ENCODE measurements at regions of chr12 and their contacts with region 1.

Region 1: GRCh38 chr12:40622246-40622838 is 69.9 kb upstream of the CNTN1 start:
- DNase-seq: peak in 6 of 35 experiments; percentile 1 to 32 (median 3)
- ATAC-seq: no peak
- H3K4me3 ChIP-seq: no peak overlapping the region
- H3K4me3 Mint-ChIP-seq: no peak overlapping the region
- H3K27ac ChIP-seq: no peak overlapping the region
- H3K27ac Mint-ChIP-seq: no peak overlapping the region
- H3K4me1 ChIP-seq: no peaks in the 10 kb centered on the region
- H3K4me1 Mint-ChIP-seq: no peaks in the 10 kb centered on the region
- H3K27me3 ChIP-seq: peaks cover 0 to 2% of the 10 kb centered on the region in 2 experiments
- H3K27me3 Mint-ChIP-seq: no peaks in the 10 kb centered on the region

Region 2: GRCh38 chr12:40375076-40375475 is 247.3 kb before region 1 on chr12:
- CTCF ChIA-PET with region 1: no interaction called
- POLR2A ChIA-PET with region 1: interaction called in 1 of 2 experiments, 10 read pairs
- DNase-seq: peak in 1 of 35 experiments; percentile 0
- ATAC-seq: no peak
- H3K4me3 ChIP-seq: no peak overlapping the region
- H3K4me3 Mint-ChIP-seq: no peak overlapping the region
- H3K27ac ChIP-seq: no peak overlapping the region
- H3K27ac Mint-ChIP-seq: no peak overlapping the region
- H3K4me1 ChIP-seq: no peaks in the 10 kb centered on the region
- H3K4me1 Mint-ChIP-seq: no peaks in the 10 kb centered on the region
- H3K27me3 ChIP-seq: no peaks in the 10 kb centered on the region
- H3K27me3 Mint-ChIP-seq: no peaks in the 10 kb centered on the region

Measured in T-cell (primary cell).